Right ventricle myocardium inferior (tissue), 1 donor: ENCODE measurements at regions of chr12 and their contacts with region 1.

Region 1: DNA sequence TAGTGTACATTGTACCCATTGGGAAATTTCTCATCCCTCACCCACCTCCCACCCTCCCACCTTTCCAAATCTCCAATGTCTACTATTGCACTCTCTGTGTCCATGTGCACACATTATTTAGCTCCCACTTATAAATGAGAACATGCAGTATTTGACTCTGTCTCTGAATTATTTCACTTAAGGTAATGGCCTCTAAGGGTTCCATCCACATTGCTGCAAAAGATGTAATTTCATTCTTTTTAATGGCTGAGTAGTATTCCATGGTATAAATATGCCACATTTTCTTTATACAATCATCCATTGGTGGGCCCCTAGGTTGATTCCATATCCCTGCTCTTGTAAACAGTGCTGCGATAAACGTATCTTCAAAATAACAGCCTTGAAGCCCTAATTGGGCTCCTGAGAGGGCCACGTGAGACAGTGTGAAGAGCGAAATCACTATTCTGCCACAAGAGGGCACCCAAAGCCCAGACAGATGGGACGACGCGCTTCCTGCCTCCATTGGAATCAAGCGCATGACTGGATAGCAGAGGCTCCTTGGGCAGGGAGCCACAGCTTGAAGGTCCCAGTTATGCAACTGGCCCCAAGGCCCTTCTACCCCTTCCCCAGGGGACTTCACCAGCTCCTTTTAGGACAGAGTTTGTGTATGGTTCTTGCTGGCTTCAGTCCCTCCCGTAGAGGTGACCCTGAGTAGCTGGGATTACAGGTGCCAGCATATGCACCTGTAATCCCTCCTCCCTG is 21.3 kb upstream of the CD27 start:
- DNase-seq: peak; percentile 92
- ATAC-seq: peak; percentile 98

Region 2: GRCh38 chr12:6345319-6346091 is 77.9 kb before region 1 on chr12:
- intact Hi-C with region 1: no loop called
- DNase-seq: no peak
- ATAC-seq: no peak

Region 3: GRCh38 chr12:6471989-6472360 is 48.5 kb after region 1 on chr12:
- intact Hi-C with region 1: no loop called
- DNase-seq: no peak
- ATAC-seq: no peak

Region 4: DNA sequence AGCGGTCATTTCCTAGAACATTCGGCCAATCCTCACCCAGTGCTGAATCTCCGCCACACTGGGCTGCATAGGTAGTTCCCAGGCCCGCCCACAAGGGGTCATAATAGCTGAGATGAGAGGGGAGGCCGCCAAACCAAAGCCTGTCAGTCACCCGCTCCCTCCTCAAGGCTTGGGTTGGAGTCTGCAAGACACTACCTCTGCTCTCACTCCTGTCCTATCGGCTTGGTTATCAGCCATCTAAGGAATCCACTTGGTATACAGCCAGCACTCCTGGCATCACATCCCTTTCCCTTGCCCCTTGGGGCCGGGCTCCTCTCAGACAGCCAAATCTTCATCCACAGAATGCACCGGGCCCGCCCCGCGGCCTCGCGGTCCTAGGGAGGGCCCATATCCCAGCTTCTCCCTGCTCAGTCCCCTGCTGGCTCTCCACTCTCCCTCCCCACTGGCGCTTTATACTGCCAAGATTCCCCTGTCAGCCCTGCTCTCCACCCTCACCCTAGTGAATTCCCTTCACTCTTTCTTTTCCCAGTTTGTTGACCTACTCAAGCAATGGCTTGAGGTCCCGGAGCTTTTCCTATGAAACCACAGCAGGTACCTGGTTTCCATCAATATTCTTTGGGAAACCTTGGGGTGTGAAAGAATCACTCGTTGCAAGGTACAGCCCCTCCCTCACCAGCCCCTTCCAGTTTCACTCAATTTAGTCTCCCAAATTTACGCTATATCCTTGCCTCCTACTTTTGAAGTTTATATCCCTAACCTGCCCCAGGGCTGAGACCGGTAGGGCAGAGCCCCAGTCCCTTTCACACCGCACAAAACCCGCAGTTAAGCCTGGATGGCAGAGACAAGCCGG is 131.0 kb after region 1 on chr12:
- intact Hi-C with region 1: loop called (anchors 5 kb)
- DNase-seq: peak; percentile 88
- ATAC-seq: peak; percentile 45